PC-9 (cell line): ENCODE measurements at regions of chr14 and their contacts with region 1.

Region 1: DNA sequence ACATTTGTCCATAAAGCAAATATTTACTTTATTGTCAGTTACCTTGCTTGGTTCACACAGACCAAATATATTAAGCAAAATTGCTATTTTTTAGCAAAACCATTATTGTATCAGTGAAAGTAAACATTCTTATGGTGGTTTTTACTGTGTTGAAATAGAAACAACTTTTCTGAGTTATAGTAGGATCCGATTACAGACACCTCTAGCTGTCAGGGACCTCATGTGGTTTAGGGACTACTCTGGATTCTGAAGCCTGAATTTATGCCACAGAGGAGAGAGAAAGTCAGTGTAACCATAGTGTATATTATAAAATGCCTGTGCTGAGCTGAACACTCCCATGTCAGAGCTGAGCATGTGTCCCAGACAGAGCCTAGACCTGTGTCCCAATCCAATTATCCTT is 287.5 kb downstream of the FLRT2 start:
- DNase-seq: no peak
- H3K4me3 ChIP-seq: no peak overlapping the region
- H3K27ac ChIP-seq: no peak overlapping the region
- H3K4me1 ChIP-seq: no peaks in the 10 kb centered on the region
- H3K27me3 ChIP-seq: no peaks in the 10 kb centered on the region
- CTCF ChIP-seq: no peak

Region 2: GRCh38 chr14:83828406-83828805 is 1989.0 kb before region 1 on chr14:
- CTCF ChIA-PET with region 1: no interaction called
- POLR2A ChIA-PET with region 1: interaction called, 10 read pairs
- intact Hi-C with region 1: no loop called
- DNase-seq: no peak
- H3K4me3 ChIP-seq: no peak overlapping the region
- H3K27ac ChIP-seq: no peak overlapping the region
- H3K4me1 ChIP-seq: no peaks in the 10 kb centered on the region
- H3K27me3 ChIP-seq: no peaks in the 10 kb centered on the region
- CTCF ChIP-seq: no peak

Region 3: DNA sequence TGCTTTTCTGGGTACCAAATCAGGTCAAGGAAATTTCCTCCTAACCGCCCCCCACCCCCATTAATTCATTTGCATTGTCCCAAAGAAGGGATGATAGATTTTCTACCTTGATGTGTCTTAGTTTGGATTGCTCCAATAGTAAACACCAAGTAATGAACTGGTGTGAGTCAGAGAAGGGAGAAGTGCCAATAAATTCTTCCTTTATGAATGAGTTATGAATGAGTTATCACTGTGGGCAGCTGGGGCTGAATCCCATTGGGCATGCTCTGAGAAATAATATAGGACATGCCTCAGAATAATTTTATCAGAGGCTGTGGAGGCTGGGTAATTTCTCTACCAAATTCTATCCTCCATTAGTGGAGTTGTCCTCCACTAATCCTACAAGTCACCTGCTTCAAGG is 565.4 kb before region 1 on chr14:
- CTCF ChIA-PET with region 1: no interaction called
- POLR2A ChIA-PET with region 1: no interaction called
- intact Hi-C with region 1: no loop called
- DNase-seq: peak in 1 of 2 experiments; percentile 49
- H3K4me3 ChIP-seq: no peak overlapping the region
- H3K27ac ChIP-seq: no peak overlapping the region
- H3K4me1 ChIP-seq: no peaks in the 10 kb centered on the region
- H3K27me3 ChIP-seq: no peaks in the 10 kb centered on the region
- CTCF ChIP-seq: no peak

Region 4: DNA sequence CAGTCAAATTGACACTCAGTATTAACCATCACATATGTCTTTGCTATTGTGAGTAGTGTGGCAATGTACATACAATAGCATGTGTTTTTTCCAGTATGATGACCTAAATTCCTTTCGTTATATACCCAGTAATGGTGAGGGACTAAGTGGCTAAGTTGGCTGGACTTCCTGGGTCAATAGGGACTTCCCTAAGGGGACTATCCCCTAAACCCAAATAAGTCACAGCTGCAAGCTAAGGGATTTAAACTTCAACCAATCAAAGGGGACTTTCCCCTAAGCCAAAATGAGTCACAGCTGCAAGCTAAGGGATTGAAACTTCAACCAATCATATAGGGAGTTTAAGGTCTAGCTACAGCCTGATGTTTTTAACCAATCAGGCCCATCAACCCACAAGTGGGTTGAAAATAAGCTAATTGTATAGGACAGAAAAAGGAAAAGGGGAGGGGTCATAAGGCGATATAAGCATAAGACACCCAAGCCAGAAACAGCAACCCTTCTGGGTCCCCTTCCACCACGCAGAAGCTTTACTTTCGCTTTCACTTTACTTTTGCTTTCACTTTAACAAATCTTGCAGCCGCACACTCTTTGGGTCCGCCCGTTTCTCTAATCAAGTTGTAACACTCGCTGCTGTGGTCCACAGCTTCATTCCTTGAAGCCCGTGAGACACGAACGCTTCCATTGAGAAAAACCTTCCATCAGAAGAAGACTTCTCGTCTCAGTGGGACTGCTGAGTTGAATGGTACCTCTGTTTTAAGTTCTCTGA is 116.9 kb after region 1 on chr14:
- CTCF ChIA-PET with region 1: no interaction called
- POLR2A ChIA-PET with region 1: no interaction called
- intact Hi-C with region 1: no loop called
- DNase-seq: peak in 1 of 2 experiments; percentile 46
- H3K4me3 ChIP-seq: peak overlapping the region; percentile 69
- H3K27ac ChIP-seq: no peak overlapping the region
- H3K4me1 ChIP-seq: no peaks in the 10 kb centered on the region
- H3K27me3 ChIP-seq: no peaks in the 10 kb centered on the region
- CTCF ChIP-seq: no peak

Region 5: GRCh38 chr14:86166541-86166940 is 349.1 kb after region 1 on chr14:
- CTCF ChIA-PET with region 1: no interaction called
- POLR2A ChIA-PET with region 1: no interaction called
- intact Hi-C with region 1: no loop called
- DNase-seq: no peak
- H3K4me3 ChIP-seq: no peak overlapping the region
- H3K27ac ChIP-seq: no peak overlapping the region
- H3K4me1 ChIP-seq: no peaks in the 10 kb centered on the region
- H3K27me3 ChIP-seq: no peaks in the 10 kb centered on the region
- CTCF ChIP-seq: no peak